CD8-positive, alpha-beta T cell (primary cell): ENCODE measurements at regions of chr4 and their contacts with region 1.

Region 1: GRCh38 chr4:147590249-147590920 is 26.8 kb upstream of the TMEM184C start:
- DNase-seq: peak in 6 of 9 experiments; percentile 10 to 53 (median 38)
- ATAC-seq: no peak
- H3K4me3 ChIP-seq: no peak overlapping the region
- H3K4me3 Mint-ChIP-seq: no peak overlapping the region
- H3K27ac ChIP-seq: no peak overlapping the region
- H3K27ac Mint-ChIP-seq: no peak overlapping the region
- H3K4me1 ChIP-seq: no peaks in the 10 kb centered on the region
- H3K4me1 Mint-ChIP-seq: peaks cover 5% of the 10 kb centered on the region
- H3K27me3 ChIP-seq: no peaks in the 10 kb centered on the region
- H3K27me3 Mint-ChIP-seq: peaks cover 4% of the 10 kb centered on the region
- CTCF ChIP-seq: peak; percentile 62

Region 2: GRCh38 chr4:146342600-146343192 is 1247.7 kb before region 1 on chr4:
- CTCF ChIA-PET with region 1: no interaction called
- POLR2A ChIA-PET with region 1: no interaction called
- intact Hi-C with region 1: loop called in 1 of 2 experiments (anchors 5 kb)
- DNase-seq: peak in 4 of 9 experiments; percentile 7 to 57 (median 34)
- ATAC-seq: no peak
- H3K4me3 ChIP-seq: no peak overlapping the region
- H3K4me3 Mint-ChIP-seq: no peak overlapping the region
- H3K27ac ChIP-seq: no peak overlapping the region
- H3K27ac Mint-ChIP-seq: no peak overlapping the region
- H3K4me1 ChIP-seq: no peaks in the 10 kb centered on the region
- H3K4me1 Mint-ChIP-seq: peaks cover 2% of the 10 kb centered on the region
- H3K27me3 ChIP-seq: no peaks in the 10 kb centered on the region
- H3K27me3 Mint-ChIP-seq: no peaks in the 10 kb centered on the region
- CTCF ChIP-seq: peak; percentile 77

Region 3: GRCh38 chr4:147019061-147019460 is 571.3 kb before region 1 on chr4:
- CTCF ChIA-PET with region 1: interaction called, 3 read pairs
- POLR2A ChIA-PET with region 1: no interaction called
- intact Hi-C with region 1: loop called in 1 of 2 experiments (anchors 5 kb)
- DNase-seq: peak; percentile 5 to 60 (median 39)
- ATAC-seq: no peak
- H3K4me3 ChIP-seq: no peak overlapping the region
- H3K4me3 Mint-ChIP-seq: no peak overlapping the region
- H3K27ac ChIP-seq: no peak overlapping the region
- H3K27ac Mint-ChIP-seq: no peak overlapping the region
- H3K4me1 ChIP-seq: no peaks in the 10 kb centered on the region
- H3K4me1 Mint-ChIP-seq: no peaks in the 10 kb centered on the region
- H3K27me3 ChIP-seq: no peaks in the 10 kb centered on the region
- H3K27me3 Mint-ChIP-seq: peaks cover 3% of the 10 kb centered on the region
- CTCF ChIP-seq: peak; percentile 41

Region 4: DNA sequence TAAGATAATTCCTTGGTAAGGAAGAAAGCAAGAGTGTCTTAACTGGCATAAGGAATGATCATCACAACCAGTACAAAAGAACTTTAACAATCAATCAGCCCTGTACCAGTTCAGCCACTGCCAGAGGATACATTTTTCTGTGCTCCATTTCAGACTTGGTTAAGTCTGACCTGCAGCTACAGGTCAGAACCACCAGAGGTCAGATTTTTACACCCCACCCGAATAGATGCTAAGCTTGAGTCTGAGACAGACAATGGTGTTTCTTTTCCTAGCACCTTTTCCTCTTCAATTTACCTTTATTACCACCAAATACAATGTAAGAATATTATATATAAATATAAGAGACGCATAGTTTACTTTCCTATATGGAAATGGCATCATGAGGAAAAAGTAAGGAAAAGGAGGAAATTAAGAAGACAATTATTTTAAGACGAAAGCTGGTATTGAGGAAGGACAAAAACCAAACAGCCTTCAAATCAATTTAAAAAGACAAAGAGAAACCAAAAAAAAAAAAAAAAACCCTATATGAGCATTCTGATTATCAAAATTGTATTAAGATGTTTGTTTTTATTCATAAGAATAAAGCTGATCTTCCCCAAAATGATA is 429.4 kb before region 1 on chr4:
- CTCF ChIA-PET with region 1: no interaction called
- POLR2A ChIA-PET with region 1: no interaction called
- intact Hi-C with region 1: loop called in 1 of 2 experiments (anchors 5 kb)
- DNase-seq: peak in 2 of 9 experiments; percentile 15 to 25
- ATAC-seq: no peak
- H3K4me3 ChIP-seq: no peak overlapping the region
- H3K4me3 Mint-ChIP-seq: no peak overlapping the region
- H3K27ac ChIP-seq: no peak overlapping the region
- H3K27ac Mint-ChIP-seq: no peak overlapping the region
- H3K4me1 ChIP-seq: no peaks in the 10 kb centered on the region
- H3K4me1 Mint-ChIP-seq: peaks cover 7% of the 10 kb centered on the region
- H3K27me3 ChIP-seq: peaks cover 0 to 9% of the 10 kb centered on the region in 2 experiments
- H3K27me3 Mint-ChIP-seq: peaks cover 23% of the 10 kb centered on the region
- CTCF ChIP-seq: peak; percentile 49

Region 5: DNA sequence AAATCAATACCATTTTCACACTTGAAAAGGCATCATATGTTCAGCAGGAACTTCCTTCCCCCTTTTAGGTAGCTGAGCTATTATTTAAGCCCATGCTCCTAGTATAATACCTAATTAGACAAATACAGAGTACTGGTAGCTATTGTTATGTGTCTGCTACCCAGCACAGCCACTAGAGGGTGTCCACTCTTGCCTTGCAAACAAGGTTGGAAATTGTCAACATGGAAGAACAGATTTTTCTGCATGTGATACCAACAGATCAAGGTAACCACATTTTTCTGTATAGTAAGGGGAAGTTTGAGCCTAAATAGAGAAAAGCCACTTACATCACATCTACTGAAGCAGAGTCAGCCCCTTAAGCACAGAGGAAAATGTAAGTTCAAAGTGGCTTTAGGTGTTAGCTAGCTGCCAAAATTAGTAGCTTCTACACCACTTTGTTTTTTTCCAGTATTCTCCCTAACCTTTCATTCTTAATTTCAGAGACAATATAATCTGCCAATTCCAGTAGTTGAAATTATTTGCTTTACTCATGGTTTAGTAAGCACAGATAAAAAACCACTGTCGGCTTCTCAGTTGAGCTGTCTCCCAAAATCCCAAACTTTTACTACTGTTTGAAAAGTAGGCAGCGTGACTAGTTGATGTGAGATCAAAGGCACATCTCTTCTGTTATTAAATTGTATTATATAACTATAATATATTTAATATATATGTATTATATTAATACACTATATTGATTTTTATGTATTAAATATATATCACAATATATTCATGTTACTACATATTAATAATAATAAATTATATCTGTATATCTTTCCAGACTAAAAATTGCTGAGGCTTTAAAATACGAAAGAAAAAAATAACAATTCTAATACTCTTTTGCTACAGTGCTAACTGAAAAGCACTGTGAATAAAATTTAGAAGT is 71.3 kb before region 1 on chr4:
- CTCF ChIA-PET with region 1: interaction called, 10 read pairs
- POLR2A ChIA-PET with region 1: no interaction called
- intact Hi-C with region 1: loop called (anchors 2 kb)
- DNase-seq: peak in 7 of 9 experiments; percentile 5 to 66 (median 47)
- ATAC-seq: peak; percentile 74
- H3K4me3 ChIP-seq: no peak overlapping the region
- H3K4me3 Mint-ChIP-seq: no peak overlapping the region
- H3K27ac ChIP-seq: no peak overlapping the region
- H3K27ac Mint-ChIP-seq: no peak overlapping the region
- H3K4me1 ChIP-seq: no peaks in the 10 kb centered on the region
- H3K4me1 Mint-ChIP-seq: no peaks in the 10 kb centered on the region
- H3K27me3 ChIP-seq: no peaks in the 10 kb centered on the region
- H3K27me3 Mint-ChIP-seq: peaks cover 16% of the 10 kb centered on the region
- CTCF ChIP-seq: peak; percentile 76